Dorsolateral prefrontal cortex (tissue), 120 donors: ENCODE measurements at regions of chr1 and their contacts with region 1.

Region 1: DNA sequence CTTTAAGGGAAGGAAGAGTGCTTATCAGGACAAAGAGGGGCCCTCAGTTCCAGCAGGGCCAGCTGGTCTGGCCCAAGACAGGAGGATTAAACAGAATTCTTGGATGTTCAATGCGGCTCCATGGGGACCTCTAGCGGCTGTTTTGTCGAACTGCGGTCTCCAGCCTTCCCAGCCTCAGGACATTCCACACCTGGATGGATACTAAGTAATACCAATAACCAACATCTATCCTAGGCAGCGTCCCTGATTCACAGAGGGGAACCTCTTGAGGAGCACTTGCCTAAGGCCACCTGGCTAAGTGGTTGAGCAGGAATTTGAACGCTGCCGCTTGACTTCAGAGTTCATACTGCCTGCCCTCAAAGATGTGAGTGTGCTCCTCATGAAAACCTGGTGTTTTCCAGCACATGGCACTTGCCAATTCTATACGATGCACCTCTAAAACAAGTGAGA is 15.5 kb upstream of the CD247 start:
- DNase-seq: peak; percentile 63 to 83 (median 70)
- H3K4me3 ChIP-seq: no peak overlapping the region
- H3K27ac ChIP-seq: peak overlapping the region in 3 of 59 donors; percentile 20 to 37 (median 27)
- H3K27me3 ChIP-seq: no peaks in the 10 kb centered on the region
- CTCF ChIP-seq: peak; percentile 59 to 97 (median 90)

Region 2: GRCh38 chr1:167066333-167067122 is 467.3 kb before region 1 on chr1:
- intact Hi-C with region 1: loop called (anchors 5 kb)
- DNase-seq: peak; percentile 60 to 89 (median 78)
- H3K4me3 ChIP-seq: peak overlapping the region in 54 of 59 donors; percentile 7 to 66 (median 42)
- H3K27ac ChIP-seq: peak overlapping the region in 6 of 59 donors; percentile 0 to 67 (median 42)
- H3K27me3 ChIP-seq: no peaks in the 10 kb centered on the region
- CTCF ChIP-seq: peak; percentile 68 to 100 (median 97)

Region 3: DNA sequence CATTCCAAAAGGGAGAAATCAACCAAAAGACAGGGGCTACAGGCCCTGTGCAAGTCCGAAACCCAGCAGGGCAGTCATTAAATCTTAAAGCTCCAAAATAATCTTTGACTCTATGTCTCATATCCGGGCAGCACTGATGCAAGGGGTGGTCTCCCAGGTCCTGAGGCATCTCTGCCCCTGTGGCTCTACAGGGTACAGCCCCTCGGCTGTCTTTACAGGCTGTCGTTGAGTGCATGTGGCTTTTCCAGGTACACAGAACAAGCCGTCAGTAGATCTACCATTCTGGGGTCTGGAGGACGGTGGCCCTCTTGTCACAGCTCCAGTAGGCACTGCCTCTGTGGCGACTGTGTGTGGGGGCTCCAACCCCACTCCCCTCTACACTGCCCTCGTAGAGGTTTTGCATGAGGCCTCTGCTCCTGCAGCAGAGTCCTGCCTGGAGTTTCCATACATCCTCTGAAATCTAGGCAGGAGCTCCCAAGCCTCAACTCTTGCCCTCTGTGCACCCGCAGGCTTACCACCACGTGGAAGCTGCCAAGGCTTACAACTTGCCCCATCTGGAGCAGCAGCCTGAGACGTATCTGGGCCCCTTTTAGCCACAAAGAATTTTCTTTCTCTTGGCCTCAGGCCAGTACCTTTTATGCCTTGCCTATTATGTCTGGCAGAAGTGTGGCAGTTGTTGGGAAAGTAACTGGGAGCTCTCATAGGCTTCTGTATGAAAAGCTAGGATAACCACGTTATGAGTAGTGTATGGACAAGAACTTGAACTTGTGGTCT is 260.7 kb before region 1 on chr1:
- intact Hi-C with region 1: loop called (anchors 5 to 10 kb)
- DNase-seq: no peak
- H3K4me3 ChIP-seq: no peak overlapping the region
- H3K27ac ChIP-seq: peak overlapping the region in 9 of 59 donors; percentile 5 to 44 (median 26)
- H3K27me3 ChIP-seq: no peaks in the 10 kb centered on the region
- CTCF ChIP-seq: no peak

Region 4: GRCh38 chr1:167373398-167373797 is 160.5 kb before region 1 on chr1:
- intact Hi-C with region 1: no loop called
- DNase-seq: no peak
- H3K4me3 ChIP-seq: no peak overlapping the region
- H3K27ac ChIP-seq: peak overlapping the region in 1 of 59 donors; percentile 4
- H3K27me3 ChIP-seq: no peaks in the 10 kb centered on the region
- CTCF ChIP-seq: no peak

Region 5: DNA sequence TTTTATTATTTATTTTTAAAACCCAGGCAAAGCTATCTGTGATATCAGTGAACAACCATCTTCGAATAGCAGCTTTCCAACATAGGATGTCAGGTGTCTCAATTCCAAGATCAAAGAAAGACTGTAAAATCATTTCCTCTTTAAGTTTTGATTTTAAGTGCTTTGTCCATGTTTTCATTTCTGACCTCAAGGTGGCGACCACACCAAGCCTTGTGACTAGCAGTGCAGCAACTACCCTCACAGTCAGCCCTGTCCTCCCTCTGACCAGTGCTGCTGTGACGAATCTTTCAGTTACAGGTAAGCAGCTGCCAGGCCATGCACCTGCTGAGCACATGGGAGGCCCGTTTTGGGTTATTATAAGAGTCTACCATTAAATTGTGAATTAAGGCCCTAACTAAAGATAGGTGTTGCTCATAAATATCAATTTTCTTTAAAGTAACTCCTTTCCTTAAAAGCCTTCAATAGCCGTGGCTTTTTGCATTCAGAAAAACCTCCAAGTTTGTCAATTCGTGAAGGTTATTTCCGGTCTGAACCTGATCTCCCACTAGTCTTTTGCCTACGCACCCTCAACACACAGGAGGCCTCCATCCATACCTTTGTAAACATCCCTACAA is 132.5 kb before region 1 on chr1:
- intact Hi-C with region 1: loop called in 1 of 2 experiments (anchors 5 kb)
- DNase-seq: peak in 6 of 10 donors; percentile 33 to 44 (median 37)
- H3K4me3 ChIP-seq: no peak overlapping the region
- H3K27ac ChIP-seq: no peak overlapping the region
- H3K27me3 ChIP-seq: no peaks in the 10 kb centered on the region
- CTCF ChIP-seq: peak; percentile 21 to 73 (median 54)

Region 6: GRCh38 chr1:167899253-167899681 is 365.4 kb after region 1 on chr1:
- intact Hi-C with region 1: no loop called
- DNase-seq: peak in 1 of 10 donors; percentile 20
- H3K4me3 ChIP-seq: no peak overlapping the region
- H3K27ac ChIP-seq: no peak overlapping the region
- H3K27me3 ChIP-seq: no peaks in the 10 kb centered on the region
- CTCF ChIP-seq: no peak